Mammary epithelial cell (primary cell): ENCODE measurements at regions of chr4 and their contacts with region 1.

Region 1: DNA sequence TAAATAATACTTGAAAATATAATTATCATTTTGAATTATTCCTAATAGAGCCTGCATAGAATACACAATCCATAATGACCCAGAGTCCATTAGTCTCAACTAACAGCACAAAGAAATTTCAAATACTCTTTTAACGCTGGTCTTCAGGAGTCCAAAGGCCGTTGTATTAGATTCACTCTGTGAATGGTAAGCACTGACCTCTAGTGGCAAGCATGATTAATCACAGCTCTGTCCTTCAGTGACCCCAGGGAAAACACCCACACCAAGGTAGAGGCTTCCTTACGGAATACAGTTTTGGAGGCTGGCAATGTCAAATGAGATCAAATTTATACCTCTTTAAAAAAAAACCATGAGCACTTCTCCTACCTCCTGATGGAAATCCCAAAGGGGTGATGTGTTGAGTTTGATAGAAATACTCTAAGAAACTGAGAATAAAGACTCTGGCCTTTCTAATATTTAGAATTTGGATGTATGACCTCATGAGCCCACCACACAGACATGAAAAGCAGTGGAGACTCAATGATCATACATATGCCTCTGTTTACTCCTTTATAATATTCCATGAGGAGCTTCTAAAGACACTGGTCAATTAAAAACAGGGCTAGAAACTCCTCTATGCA is 147.2 kb upstream of the DKK2 start:
- DNase-seq: peak; percentile 47
- H3K4me3 ChIP-seq: no peak overlapping the region
- H3K27ac ChIP-seq: no peak overlapping the region
- H3K4me1 ChIP-seq: no peaks in the 10 kb centered on the region
- H3K27me3 ChIP-seq: no peaks in the 10 kb centered on the region
- CTCF ChIP-seq: peak; percentile 79 to 86

Region 2: GRCh38 chr4:107037199-107037584 is 146.1 kb before region 1 on chr4:
- CTCF ChIA-PET with region 1: interaction called, 3 read pairs
- dilution Hi-C with region 1: no loop called
- in situ Hi-C with region 1: no loop called
- intact Hi-C with region 1: loop called (anchors 5 kb)
- DNase-seq: no peak
- H3K4me3 ChIP-seq: no peak overlapping the region
- H3K27ac ChIP-seq: no peak overlapping the region
- H3K4me1 ChIP-seq: peaks cover 14% of the 10 kb centered on the region
- H3K27me3 ChIP-seq: peaks cover 39% of the 10 kb centered on the region
- CTCF ChIP-seq: peak; percentile 15 to 58

Region 3: GRCh38 chr4:107094332-107094731 is 88.9 kb before region 1 on chr4:
- CTCF ChIA-PET with region 1: no interaction called
- dilution Hi-C with region 1: no loop called
- in situ Hi-C with region 1: no loop called
- intact Hi-C with region 1: loop called (anchors 1 kb)
- DNase-seq: peak; percentile 11
- H3K4me3 ChIP-seq: no peak overlapping the region
- H3K27ac ChIP-seq: no peak overlapping the region
- H3K4me1 ChIP-seq: no peaks in the 10 kb centered on the region
- H3K27me3 ChIP-seq: no peaks in the 10 kb centered on the region
- CTCF ChIP-seq: peak; percentile 39 to 67

Region 4: DNA sequence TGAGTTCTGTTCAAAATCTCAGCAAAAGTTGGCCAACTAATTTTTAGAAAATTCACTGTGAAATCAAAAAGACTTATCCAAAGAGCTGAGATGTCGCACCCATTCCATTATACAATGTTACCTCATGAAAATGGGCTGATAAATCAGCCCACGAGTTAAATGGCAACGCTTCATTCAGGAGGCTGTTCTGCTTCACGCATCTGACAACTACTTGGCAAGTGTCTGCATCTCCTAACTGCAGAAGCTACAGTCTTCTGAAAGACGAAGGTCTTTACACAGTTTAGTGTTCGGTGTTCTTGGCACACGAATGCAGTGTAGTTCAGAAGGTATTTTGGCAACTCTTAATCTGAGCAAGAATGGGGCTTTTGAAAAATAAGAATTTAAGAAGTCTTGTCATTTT is 19.5 kb after region 1 on chr4:
- CTCF ChIA-PET with region 1: no interaction called
- dilution Hi-C with region 1: no loop called
- in situ Hi-C with region 1: no loop called
- intact Hi-C with region 1: no loop called
- DNase-seq: no peak
- H3K4me3 ChIP-seq: no peak overlapping the region
- H3K27ac ChIP-seq: no peak overlapping the region
- H3K4me1 ChIP-seq: peaks cover 5% of the 10 kb centered on the region
- H3K27me3 ChIP-seq: no peaks in the 10 kb centered on the region
- CTCF ChIP-seq: no peak

Region 5: GRCh38 chr4:107519053-107519452 is 335.8 kb after region 1 on chr4:
- CTCF ChIA-PET with region 1: no interaction called
- dilution Hi-C with region 1: no loop called
- in situ Hi-C with region 1: no loop called
- intact Hi-C with region 1: loop called (anchors 2 kb)
- DNase-seq: peak; percentile 8
- H3K4me3 ChIP-seq: no peak overlapping the region
- H3K27ac ChIP-seq: no peak overlapping the region
- H3K4me1 ChIP-seq: no peaks in the 10 kb centered on the region
- H3K27me3 ChIP-seq: no peaks in the 10 kb centered on the region
- CTCF ChIP-seq: peak; percentile 44 to 66